A673 (cell line): ENCODE measurements at regions of chr7 and their contacts with region 1.

Region 1: DNA sequence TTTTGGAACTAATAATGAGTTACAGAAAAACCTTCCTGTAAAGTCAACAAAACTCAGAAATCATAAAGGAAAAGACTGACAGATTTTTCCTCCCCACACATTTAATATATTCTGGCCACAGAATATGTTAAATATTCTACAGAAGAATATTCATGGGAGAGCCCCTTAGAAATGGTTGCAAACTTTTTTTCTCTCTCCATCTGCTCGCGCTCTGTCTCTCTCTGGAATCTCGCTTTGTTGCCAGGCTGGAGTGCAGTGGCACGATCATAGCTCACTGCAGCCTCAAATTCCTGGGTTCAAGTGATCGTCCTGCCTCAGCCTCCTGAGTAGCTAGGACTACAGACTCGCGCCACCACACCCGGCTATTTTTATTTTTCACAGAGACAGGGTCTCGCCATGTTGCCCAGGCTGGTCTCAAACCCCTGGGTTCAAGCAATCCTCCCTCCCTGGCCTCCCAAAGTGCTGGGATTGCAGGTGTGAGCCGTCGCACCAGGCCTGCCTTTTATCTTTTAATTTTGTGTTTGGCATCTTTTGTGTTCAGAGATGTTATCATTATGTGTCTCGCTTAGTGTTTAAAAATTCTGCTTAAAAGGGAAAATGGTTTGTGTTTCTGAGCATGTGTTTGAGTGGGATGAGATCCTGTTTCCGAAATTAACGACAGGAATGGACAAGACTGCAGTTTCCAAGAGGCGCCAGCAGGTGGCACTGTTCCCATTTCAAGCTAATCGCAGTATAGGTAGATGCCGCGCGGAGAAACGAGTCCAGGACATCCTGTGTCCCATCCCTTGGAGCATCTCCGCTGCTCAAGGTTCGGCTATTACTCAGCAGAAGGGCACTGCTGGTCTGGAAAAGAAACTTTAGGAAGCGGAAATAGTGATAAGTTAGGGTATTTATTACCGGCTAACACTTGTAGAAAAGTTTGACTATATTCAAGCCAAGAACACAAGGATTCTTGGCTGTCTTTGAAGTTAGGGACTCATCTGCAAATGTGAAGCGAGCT is 23.1 kb upstream of the ST7 start:
- DNase-seq: peak; percentile 88
- H3K4me3 ChIP-seq: no peak overlapping the region
- H3K27ac ChIP-seq: no peak overlapping the region
- H3K4me1 ChIP-seq: no peaks in the 10 kb centered on the region
- H3K27me3 ChIP-seq: no peaks in the 10 kb centered on the region
- CTCF ChIP-seq: peak; percentile 93

Region 2: DNA sequence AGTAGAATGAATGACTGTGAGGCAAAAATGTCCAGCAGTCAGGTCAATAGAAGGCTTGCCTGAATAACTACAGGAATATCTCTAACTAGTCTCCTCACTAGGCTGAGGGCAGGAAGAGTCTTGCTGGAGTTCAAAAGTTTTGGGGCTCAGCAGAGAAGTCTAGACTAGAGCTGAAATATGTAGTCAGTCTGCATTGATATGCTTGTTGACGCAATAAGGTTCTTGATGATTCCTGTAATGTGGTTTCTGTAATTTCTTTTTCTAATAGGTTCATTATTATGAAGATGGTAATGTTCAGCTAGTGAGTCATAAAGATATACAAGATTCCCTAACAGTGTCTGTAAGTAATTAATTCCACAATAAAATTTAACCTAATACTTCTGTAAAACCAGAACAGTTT is 18.4 kb before region 1 on chr7:
- CTCF ChIA-PET with region 1: no interaction called
- POLR2A ChIA-PET with region 1: no interaction called
- intact Hi-C with region 1: no loop called
- DNase-seq: no peak
- H3K4me3 ChIP-seq: no peak overlapping the region
- H3K27ac ChIP-seq: no peak overlapping the region
- H3K4me1 ChIP-seq: no peaks in the 10 kb centered on the region
- H3K27me3 ChIP-seq: no peaks in the 10 kb centered on the region
- CTCF ChIP-seq: no peak

Region 3: DNA sequence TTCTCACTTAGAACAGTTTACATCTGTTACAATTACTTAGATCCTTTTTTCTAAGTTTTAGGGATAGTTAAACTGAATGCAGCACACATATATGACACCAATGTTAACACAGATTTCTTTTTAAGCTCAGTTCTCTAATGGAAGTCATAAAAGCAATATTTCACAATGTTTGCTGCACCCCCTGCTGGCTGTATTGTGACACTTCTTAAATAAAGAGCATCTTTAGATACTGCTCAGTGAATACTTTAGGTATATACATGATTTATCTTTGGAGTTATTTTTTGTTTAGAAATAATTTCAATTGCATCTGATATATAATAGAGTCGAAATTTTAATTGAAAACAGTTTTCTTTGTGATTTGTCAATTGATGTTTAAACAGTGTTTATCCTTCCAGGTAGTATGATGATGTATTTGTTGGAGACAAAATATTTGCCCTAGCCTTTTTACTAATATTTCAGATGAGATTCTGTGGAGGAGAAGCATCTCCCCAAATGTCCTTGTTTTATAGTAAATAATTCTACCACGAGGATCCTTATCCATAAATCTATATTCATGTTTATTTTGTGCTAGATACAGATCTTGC is 197.5 kb after region 1 on chr7:
- CTCF ChIA-PET with region 1: interaction called, 15 read pairs
- POLR2A ChIA-PET with region 1: no interaction called
- intact Hi-C with region 1: loop called (anchors 2 kb)
- DNase-seq: peak; percentile 82
- H3K4me3 ChIP-seq: no peak overlapping the region
- H3K27ac ChIP-seq: no peak overlapping the region
- H3K4me1 ChIP-seq: peaks cover 12% of the 10 kb centered on the region
- H3K27me3 ChIP-seq: no peaks in the 10 kb centered on the region
- CTCF ChIP-seq: peak; percentile 81

Region 4: GRCh38 chr7:117530390-117530789 is 600.2 kb after region 1 on chr7:
- CTCF ChIA-PET with region 1: no interaction called
- POLR2A ChIA-PET with region 1: no interaction called
- intact Hi-C with region 1: no loop called
- DNase-seq: no peak
- H3K4me3 ChIP-seq: no peak overlapping the region
- H3K27ac ChIP-seq: no peak overlapping the region
- H3K4me1 ChIP-seq: no peaks in the 10 kb centered on the region
- H3K27me3 ChIP-seq: no peaks in the 10 kb centered on the region
- CTCF ChIP-seq: no peak